ENCODE measurements at regions of chr14 and their contacts with region 1.

Region 1: DNA sequence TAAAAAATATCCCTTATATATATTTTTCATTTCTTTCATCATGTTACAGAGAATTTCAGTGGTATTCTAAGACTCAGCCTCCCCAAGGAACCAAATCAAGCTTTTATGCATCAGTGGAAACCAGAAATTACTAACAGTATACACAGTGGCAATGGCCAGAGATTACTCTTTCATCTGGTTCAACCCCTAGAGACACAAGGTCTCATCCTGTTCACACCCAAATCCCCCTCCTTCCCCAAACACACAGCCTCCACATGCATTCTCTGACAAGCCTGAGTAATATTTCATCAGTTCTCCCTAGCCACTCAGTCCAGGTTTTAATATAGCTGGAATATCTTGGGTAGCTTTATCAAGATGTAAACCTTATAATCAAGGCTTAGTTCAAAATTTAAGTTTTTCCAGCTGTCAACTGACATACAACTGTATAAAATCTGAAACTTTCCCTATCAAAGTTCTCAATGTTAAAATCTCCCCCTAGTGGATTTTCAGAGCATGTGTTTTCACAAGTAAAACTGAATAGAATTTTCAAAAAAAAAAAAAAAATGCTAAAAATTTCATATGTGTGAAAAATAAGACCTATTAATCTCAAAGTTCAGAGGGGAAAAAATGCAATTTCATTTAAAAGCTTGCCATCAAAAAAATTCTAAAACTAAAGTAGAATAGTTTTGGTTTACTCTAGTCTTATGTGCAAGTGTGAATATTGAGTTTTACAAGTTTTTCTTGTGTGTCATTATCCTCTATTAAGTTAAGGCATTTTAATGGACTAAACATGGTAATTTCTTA is 10.5 kb upstream of the SSTR1 start:
- DNase-seq: peak in 4 of 5 donors; percentile 18 to 30 (median 30)
- H3K4me3 ChIP-seq: no peak overlapping the region
- H3K4me3 Mint-ChIP-seq: no peak overlapping the region
- H3K27ac ChIP-seq: no peak overlapping the region
- H3K27ac Mint-ChIP-seq: peak overlapping the region in 3 of 7 donors; percentile 43 to 58 (median 48)
- H3K4me1 ChIP-seq: peaks cover 4% of the 10 kb centered on the region
- H3K4me1 Mint-ChIP-seq: peaks cover 3 to 5% (median 5%) of the 10 kb centered on the region in 4 donors
- H3K27me3 ChIP-seq: no peaks in the 10 kb centered on the region
- H3K27me3 Mint-ChIP-seq: no peaks in the 10 kb centered on the region

Region 2: GRCh38 chr14:37650021-37650715 is 547.0 kb before region 1 on chr14:
- CTCF ChIA-PET with region 1: no interaction called
- POLR2A ChIA-PET with region 1: no interaction called
- intact Hi-C with region 1: no loop called
- DNase-seq: no peak
- H3K4me3 ChIP-seq: no peak overlapping the region
- H3K4me3 Mint-ChIP-seq: no peak overlapping the region
- H3K27ac ChIP-seq: no peak overlapping the region
- H3K27ac Mint-ChIP-seq: no peak overlapping the region
- H3K4me1 ChIP-seq: no peaks in the 10 kb centered on the region
- H3K4me1 Mint-ChIP-seq: no peaks in the 10 kb centered on the region
- H3K27me3 ChIP-seq: no peaks in the 10 kb centered on the region
- H3K27me3 Mint-ChIP-seq: no peaks in the 10 kb centered on the region

Region 3: DNA sequence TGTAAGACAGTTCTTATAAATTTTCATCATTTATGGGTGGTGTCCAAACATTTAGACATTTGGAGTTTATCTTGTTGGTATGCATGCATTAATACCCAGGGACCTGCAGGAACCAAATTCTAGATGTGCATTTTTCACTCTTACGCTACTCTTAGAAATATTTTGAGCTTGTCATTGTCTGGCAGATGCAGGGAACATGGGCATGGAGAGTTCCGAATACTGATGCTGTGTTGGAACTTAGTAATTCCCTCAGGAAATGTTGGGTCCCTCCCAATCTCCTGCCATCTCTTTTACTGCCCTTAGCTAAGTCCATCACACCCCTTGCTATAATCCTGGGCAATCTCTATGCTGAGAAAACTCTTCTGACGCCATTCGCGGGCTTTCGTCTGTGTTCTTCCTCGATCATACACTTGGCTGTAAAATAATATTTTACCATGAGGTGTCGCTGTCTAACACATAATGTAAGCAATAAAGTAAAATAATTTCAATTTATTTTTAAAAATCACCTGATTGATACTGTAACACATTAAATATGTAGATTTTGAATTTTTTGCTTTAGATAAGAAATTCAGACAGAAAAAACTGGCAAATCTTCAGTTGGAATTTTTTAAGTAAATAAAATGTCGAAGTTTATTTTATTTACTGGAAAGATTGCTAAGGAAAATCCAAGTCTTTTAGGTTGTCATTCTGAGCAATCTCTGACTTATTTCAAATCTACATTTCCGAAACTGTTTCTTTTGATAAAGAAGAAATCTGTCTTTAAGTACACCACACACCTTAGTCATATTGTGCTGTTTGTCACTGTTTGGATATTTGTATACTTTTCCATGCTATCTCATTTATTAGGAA is 293.6 kb before region 1 on chr14:
- CTCF ChIA-PET with region 1: no interaction called
- POLR2A ChIA-PET with region 1: no interaction called
- intact Hi-C with region 1: loop called (anchors 1 kb)
- DNase-seq: peak in 4 of 5 donors; percentile 27 to 45 (median 33)
- H3K4me3 ChIP-seq: no peak overlapping the region
- H3K4me3 Mint-ChIP-seq: no peak overlapping the region
- H3K27ac ChIP-seq: no peak overlapping the region
- H3K27ac Mint-ChIP-seq: peak overlapping the region in 1 of 7 donors; percentile 10
- H3K4me1 ChIP-seq: no peaks in the 10 kb centered on the region
- H3K4me1 Mint-ChIP-seq: peaks cover 0 to 3% (median 2%) of the 10 kb centered on the region in 4 donors
- H3K27me3 ChIP-seq: no peaks in the 10 kb centered on the region
- H3K27me3 Mint-ChIP-seq: peaks cover 14 to 21% of the 10 kb centered on the region in 2 donors

Region 4: DNA sequence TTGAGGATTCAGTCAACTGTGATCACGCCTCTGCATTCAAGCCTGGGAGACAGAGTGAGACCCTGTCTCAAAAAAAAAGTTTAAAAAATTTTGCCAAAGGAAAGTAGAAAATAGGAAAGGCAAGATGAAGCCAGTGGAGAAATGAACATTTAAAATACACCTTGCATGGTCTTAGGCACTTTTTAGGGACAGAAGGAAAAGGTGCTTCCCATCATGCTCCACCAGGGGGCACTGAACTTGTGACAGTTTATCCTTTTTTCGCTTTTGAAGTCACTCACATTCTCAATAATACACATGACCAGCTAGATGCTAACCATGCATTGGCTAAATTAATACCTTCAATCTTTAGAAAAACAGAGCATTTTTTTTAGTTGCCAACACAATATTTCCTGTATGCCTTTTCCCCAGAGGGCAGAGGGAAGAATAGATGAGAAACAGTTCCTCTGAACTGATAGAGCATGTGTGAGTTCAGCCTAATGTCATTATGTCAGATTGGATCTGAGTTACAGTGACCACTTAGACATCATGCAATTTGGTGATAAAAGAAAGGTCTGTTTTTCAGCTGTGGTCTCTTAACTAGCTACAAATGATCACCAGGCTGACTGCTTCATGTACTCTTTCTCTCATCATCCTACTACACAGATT is 211.2 kb before region 1 on chr14:
- CTCF ChIA-PET with region 1: interaction called, 13 read pairs
- POLR2A ChIA-PET with region 1: no interaction called
- intact Hi-C with region 1: loop called (anchors 1 kb)
- DNase-seq: peak; percentile 35 to 55 (median 48)
- H3K4me3 ChIP-seq: no peak overlapping the region
- H3K4me3 Mint-ChIP-seq: no peak overlapping the region
- H3K27ac ChIP-seq: no peak overlapping the region
- H3K27ac Mint-ChIP-seq: no peak overlapping the region
- H3K4me1 ChIP-seq: no peaks in the 10 kb centered on the region
- H3K4me1 Mint-ChIP-seq: peaks cover 5 to 6% (median 5%) of the 10 kb centered on the region in 4 donors
- H3K27me3 ChIP-seq: no peaks in the 10 kb centered on the region
- H3K27me3 Mint-ChIP-seq: no peaks in the 10 kb centered on the region

Region 5: GRCh38 chr14:38056270-38056669 is 140.9 kb before region 1 on chr14:
- CTCF ChIA-PET with region 1: no interaction called
- POLR2A ChIA-PET with region 1: no interaction called
- intact Hi-C with region 1: loop called (anchors 1 kb)
- DNase-seq: no peak
- H3K4me3 ChIP-seq: no peak overlapping the region
- H3K4me3 Mint-ChIP-seq: no peak overlapping the region
- H3K27ac ChIP-seq: no peak overlapping the region
- H3K27ac Mint-ChIP-seq: no peak overlapping the region
- H3K4me1 ChIP-seq: no peaks in the 10 kb centered on the region
- H3K4me1 Mint-ChIP-seq: peaks cover 0 to 3% (median under 1%) of the 10 kb centered on the region in 4 donors
- H3K27me3 ChIP-seq: no peaks in the 10 kb centered on the region
- H3K27me3 Mint-ChIP-seq: no peaks in the 10 kb centered on the region

Region 6: GRCh38 chr14:38065106-38065762 is 132.0 kb before region 1 on chr14:
- CTCF ChIA-PET with region 1: no interaction called
- POLR2A ChIA-PET with region 1: no interaction called
- intact Hi-C with region 1: loop called (anchors 2 kb)
- DNase-seq: peak; percentile 80 to 93 (median 83)
- H3K4me3 ChIP-seq: no peak overlapping the region
- H3K4me3 Mint-ChIP-seq: peak overlapping the region; percentile 43 to 77 (median 68)
- H3K27ac ChIP-seq: peak overlapping the region; percentile 88
- H3K27ac Mint-ChIP-seq: peak overlapping the region; percentile 92 to 99 (median 95)
- H3K4me1 ChIP-seq: peaks cover 52% of the 10 kb centered on the region
- H3K4me1 Mint-ChIP-seq: peaks cover 32 to 47% (median 34%) of the 10 kb centered on the region in 4 donors
- H3K27me3 ChIP-seq: no peaks in the 10 kb centered on the region
- H3K27me3 Mint-ChIP-seq: no peaks in the 10 kb centered on the region

Region 7: GRCh38 chr14:38184132-38184531 is 13.1 kb before region 1 on chr14:
- CTCF ChIA-PET with region 1: no interaction called
- POLR2A ChIA-PET with region 1: no interaction called
- intact Hi-C with region 1: no loop called
- DNase-seq: no peak
- H3K4me3 ChIP-seq: no peak overlapping the region
- H3K4me3 Mint-ChIP-seq: no peak overlapping the region
- H3K27ac ChIP-seq: no peak overlapping the region
- H3K27ac Mint-ChIP-seq: no peak overlapping the region
- H3K4me1 ChIP-seq: no peaks in the 10 kb centered on the region
- H3K4me1 Mint-ChIP-seq: peaks cover 7 to 15% (median 8%) of the 10 kb centered on the region in 4 donors
- H3K27me3 ChIP-seq: no peaks in the 10 kb centered on the region
- H3K27me3 Mint-ChIP-seq: no peaks in the 10 kb centered on the region

Region 8: GRCh38 chr14:38208618-38209562 is 11.7 kb after region 1 on chr14:
- CTCF ChIA-PET with region 1: no interaction called
- POLR2A ChIA-PET with region 1: no interaction called
- intact Hi-C with region 1: no loop called
- DNase-seq: no peak
- H3K4me3 ChIP-seq: no peak overlapping the region
- H3K4me3 Mint-ChIP-seq: peak overlapping the region; percentile 40 to 81 (median 70)
- H3K27ac ChIP-seq: no peak overlapping the region
- H3K27ac Mint-ChIP-seq: peak overlapping the region in 1 of 7 donors; percentile 16
- H3K4me1 ChIP-seq: peaks cover 10% of the 10 kb centered on the region
- H3K4me1 Mint-ChIP-seq: peaks cover 22 to 41% (median 25%) of the 10 kb centered on the region in 4 donors
- H3K27me3 ChIP-seq: peaks cover 4% of the 10 kb centered on the region
- H3K27me3 Mint-ChIP-seq: peaks cover 50 to 54% of the 10 kb centered on the region in 2 donors

Region 9: DNA sequence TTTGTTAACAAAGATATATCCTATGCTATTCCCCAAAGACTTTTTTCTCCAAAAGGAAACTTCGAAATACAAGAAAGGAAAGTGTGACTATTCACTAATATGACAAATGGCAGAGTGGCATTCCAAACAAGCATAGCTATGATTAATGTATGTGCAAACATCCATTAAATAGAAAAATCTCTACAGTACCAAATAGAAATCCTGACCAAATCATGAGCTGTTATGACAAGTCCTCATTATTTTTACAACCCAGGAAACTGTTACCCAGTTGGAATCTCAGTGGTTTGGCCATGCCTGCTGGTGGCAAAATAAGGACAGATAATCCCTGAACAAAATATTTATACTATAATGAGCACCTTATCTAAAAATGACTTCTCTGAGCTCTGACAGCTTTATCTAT is 703.7 kb after region 1 on chr14:
- CTCF ChIA-PET with region 1: no interaction called
- POLR2A ChIA-PET with region 1: no interaction called
- intact Hi-C with region 1: no loop called
- DNase-seq: no peak
- H3K4me3 ChIP-seq: no peak overlapping the region
- H3K4me3 Mint-ChIP-seq: no peak overlapping the region
- H3K27ac ChIP-seq: no peak overlapping the region
- H3K27ac Mint-ChIP-seq: no peak overlapping the region
- H3K4me1 ChIP-seq: no peaks in the 10 kb centered on the region
- H3K4me1 Mint-ChIP-seq: no peaks in the 10 kb centered on the region
- H3K27me3 ChIP-seq: peaks cover 3% of the 10 kb centered on the region
- H3K27me3 Mint-ChIP-seq: peaks cover 2% of the 10 kb centered on the region in 2 donors